ENCODE measurements at regions of chr15 and their contacts with region 1.

Region 1: DNA sequence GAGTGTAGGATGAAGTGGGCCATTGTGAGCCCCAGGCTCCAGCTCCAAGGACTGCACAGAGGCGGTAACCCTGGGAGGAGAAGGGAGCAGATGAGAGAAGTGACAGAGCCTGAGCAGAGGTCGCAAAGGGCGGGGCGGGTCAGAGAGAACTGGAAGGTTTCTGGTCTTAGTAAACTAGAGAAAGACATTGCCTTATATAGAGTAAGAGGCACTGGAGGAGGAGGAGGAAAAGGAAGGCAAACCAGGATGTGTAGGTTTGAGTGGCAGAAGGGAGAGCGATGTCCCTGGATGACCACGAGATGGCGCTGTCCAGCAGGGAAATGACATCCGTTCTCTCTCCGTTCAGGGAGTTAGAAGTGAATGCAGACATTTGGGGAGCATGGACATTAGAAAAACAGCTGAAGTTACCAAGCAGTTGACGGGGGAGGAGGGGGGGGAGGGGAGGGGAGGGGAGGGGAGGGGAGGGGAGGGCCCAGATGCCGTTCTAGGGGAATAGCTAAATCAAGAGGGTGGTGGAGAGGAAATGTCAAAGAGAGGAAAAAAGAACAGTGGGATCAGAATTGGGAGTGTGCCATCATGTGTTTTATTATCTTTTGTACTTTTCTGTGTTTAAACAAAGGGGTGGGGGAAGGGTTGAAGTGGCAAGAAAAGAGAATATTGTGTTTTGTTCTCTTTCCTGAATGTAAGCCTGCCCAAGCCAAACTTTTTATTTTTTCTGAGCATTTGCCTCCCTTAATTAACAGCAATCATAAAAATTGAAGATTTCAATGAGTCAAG is 48.8 kb downstream of the STARD5 start:
- DNase-seq: peak; percentile 71 to 94
- ATAC-seq: peak; percentile 89 to 97 (median 95)
- H3K4me3 ChIP-seq: no peak overlapping the region
- H3K4me3 Mint-ChIP-seq: no peak overlapping the region
- H3K27ac ChIP-seq: no peak overlapping the region
- H3K27ac Mint-ChIP-seq: peak overlapping the region; percentile 11 to 77
- H3K4me1 ChIP-seq: no peaks in the 10 kb centered on the region
- H3K4me1 Mint-ChIP-seq: peaks cover 9 to 12% of the 10 kb centered on the region in 2 donors
- H3K27me3 ChIP-seq: no peaks in the 10 kb centered on the region
- H3K27me3 Mint-ChIP-seq: no peaks in the 10 kb centered on the region
- CTCF ChIP-seq: peak; percentile 75

Region 2: DNA sequence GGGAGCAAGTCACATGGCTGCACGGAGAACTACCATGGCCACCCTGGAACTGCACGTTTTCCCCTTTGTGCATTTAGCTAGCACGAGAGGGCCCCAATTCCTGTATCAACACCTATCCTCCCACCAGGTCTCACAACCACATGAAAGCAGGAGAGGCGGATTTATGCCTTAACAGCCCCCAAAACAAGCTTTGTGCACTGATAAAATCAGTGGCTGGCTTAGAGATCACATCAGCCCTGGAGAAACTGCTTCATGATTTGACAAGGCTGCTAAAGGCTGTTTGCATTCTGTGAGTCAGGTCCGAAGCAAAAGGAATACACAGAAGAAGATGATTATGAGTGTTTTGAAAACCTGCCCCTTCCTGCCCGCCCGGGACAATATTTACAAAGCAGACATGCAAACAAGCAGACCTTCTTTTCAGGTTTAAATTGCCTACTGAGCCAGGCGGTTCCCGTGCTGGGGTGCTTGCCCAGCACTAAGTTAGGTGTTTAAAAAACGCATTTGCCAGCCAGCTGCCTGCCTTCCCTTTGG is 470.1 kb before region 1 on chr15:
- intact Hi-C with region 1: no loop called
- DNase-seq: peak in 1 of 2 donors; percentile 7
- ATAC-seq: no peak
- H3K4me3 ChIP-seq: no peak overlapping the region
- H3K4me3 Mint-ChIP-seq: no peak overlapping the region
- H3K27ac ChIP-seq: no peak overlapping the region
- H3K27ac Mint-ChIP-seq: no peak overlapping the region
- H3K4me1 ChIP-seq: no peaks in the 10 kb centered on the region
- H3K4me1 Mint-ChIP-seq: no peaks in the 10 kb centered on the region
- H3K27me3 ChIP-seq: no peaks in the 10 kb centered on the region
- H3K27me3 Mint-ChIP-seq: peaks cover 4 to 13% of the 10 kb centered on the region in 2 donors
- CTCF ChIP-seq: no peak

Region 3: DNA sequence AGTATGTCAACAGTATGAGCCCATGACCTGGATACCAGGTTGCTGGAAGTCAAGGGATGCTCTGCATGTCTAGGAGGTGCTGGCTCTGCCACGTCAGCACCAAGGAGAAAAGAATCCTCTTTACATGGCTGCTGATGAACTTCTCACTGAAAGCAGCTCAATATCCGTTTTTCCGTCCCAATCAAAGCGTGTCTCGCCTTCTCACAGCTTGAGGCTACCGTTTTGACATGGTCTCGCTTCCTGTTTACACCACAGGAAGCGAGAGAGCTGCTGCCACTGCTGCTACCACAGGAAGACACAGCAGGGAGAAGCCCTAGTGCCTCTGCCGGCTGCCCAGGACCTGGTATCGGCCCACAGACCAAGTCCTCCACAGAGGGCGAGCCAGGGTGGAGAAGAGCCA is 21.6 kb after region 1 on chr15:
- intact Hi-C with region 1: loop called (anchors 2 kb)
- DNase-seq: peak; percentile 64 to 92
- ATAC-seq: peak; percentile 62 to 79 (median 77)
- H3K4me3 ChIP-seq: peak overlapping the region; percentile 72
- H3K4me3 Mint-ChIP-seq: peak overlapping the region; percentile 99
- H3K27ac ChIP-seq: peak overlapping the region; percentile 81
- H3K27ac Mint-ChIP-seq: peak overlapping the region; percentile 97 to 98
- H3K4me1 ChIP-seq: peaks cover 89% of the 10 kb centered on the region
- H3K4me1 Mint-ChIP-seq: peaks cover 93 to 100% of the 10 kb centered on the region in 2 donors
- H3K27me3 ChIP-seq: no peaks in the 10 kb centered on the region
- H3K27me3 Mint-ChIP-seq: no peaks in the 10 kb centered on the region
- CTCF ChIP-seq: no peak

Region 4: DNA sequence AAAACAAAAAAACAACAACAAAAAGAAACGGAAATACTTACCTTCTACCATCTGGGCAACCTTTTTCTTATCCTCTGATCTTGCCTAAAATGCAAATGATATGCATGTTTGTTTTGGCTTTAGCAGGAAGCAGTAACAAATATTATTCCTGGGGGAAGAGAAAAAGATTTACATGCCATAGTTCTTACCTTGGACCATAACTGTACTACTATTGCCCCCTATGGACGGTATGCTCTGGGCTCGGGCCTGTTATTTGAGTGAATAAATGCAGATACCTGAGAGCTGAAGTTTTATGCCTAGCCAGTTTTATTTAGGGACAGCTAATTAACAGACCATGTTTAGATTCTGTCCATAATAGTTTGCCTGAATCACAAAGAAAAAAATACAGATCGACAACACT is 61.4 kb after region 1 on chr15:
- intact Hi-C with region 1: loop called (anchors 1 kb)
- DNase-seq: peak in 1 of 2 donors; percentile 70
- ATAC-seq: peak in 2 of 3 donors; percentile 38 to 58
- H3K4me3 ChIP-seq: no peak overlapping the region
- H3K4me3 Mint-ChIP-seq: no peak overlapping the region
- H3K27ac ChIP-seq: no peak overlapping the region
- H3K27ac Mint-ChIP-seq: no peak overlapping the region
- H3K4me1 ChIP-seq: peaks cover 4% of the 10 kb centered on the region
- H3K4me1 Mint-ChIP-seq: no peaks in the 10 kb centered on the region
- H3K27me3 ChIP-seq: no peaks in the 10 kb centered on the region
- H3K27me3 Mint-ChIP-seq: peaks cover 3 to 8% of the 10 kb centered on the region in 2 donors
- CTCF ChIP-seq: peak; percentile 37

Region 5: DNA sequence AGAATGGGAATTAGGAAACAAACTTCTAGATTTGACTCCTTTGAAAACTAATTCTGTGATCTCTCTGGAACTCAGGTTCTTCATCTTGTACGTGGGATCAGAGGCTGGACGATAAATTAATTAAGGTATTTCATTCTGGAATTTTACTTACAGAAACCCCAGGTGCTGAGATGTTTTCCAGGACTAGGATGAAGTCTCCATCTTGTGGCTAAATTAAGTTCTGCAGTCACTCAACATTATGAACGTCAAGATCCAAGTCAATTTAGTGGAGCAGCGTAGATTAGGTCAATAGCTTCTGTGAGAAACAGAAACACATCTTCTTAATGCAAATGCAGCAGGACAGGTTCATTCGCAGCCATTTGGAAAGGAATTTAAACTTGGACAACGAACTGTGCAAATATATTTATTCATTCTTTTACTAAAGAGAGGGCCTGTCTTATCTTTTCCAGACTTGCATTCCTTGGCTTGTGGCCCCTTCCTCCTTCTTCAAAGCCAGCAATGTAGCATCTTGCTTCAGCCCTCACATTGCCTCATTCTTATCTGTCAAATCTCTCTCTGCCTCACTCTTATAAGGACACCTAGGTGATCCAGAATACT is 125.6 kb after region 1 on chr15:
- intact Hi-C with region 1: loop called (anchors 1 kb)
- DNase-seq: peak in 1 of 2 donors; percentile 78
- ATAC-seq: peak in 1 of 3 donors; percentile 61
- H3K4me3 ChIP-seq: no peak overlapping the region
- H3K4me3 Mint-ChIP-seq: no peak overlapping the region
- H3K27ac ChIP-seq: no peak overlapping the region
- H3K27ac Mint-ChIP-seq: no peak overlapping the region
- H3K4me1 ChIP-seq: no peaks in the 10 kb centered on the region
- H3K4me1 Mint-ChIP-seq: no peaks in the 10 kb centered on the region
- H3K27me3 ChIP-seq: no peaks in the 10 kb centered on the region
- H3K27me3 Mint-ChIP-seq: peaks cover 0 to 6% of the 10 kb centered on the region in 2 donors
- CTCF ChIP-seq: peak; percentile 70